ENCODE measurements at regions of chr2 and their contacts with region 1.

Region 1: DNA sequence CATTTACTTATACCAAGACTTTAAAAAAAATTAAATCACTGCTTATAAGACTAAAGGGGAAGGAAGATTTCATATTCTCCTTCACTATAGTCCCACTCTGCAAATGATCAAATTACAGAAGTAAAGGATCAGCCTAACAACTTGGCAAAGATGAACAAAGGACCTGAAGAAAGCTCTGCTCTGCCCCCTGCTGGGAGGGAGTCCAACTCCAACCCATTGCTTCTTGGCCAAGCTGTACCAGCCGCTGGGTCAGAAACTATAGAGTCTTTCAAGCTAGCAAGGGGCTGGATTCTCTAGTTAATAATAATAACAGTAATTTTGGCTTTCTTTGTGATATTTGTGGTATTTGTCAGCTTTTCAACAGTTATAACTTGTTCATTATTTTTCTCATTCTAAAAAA is 927.0 kb upstream of the CRIM1 start:
- DNase-seq: peak; percentile 56
- ATAC-seq: peak; percentile 39
- H3K4me3 Mint-ChIP-seq: no peak overlapping the region
- H3K27ac Mint-ChIP-seq: no peak overlapping the region
- H3K4me1 Mint-ChIP-seq: no peaks in the 10 kb centered on the region
- H3K27me3 Mint-ChIP-seq: no peaks in the 10 kb centered on the region

Region 2: DNA sequence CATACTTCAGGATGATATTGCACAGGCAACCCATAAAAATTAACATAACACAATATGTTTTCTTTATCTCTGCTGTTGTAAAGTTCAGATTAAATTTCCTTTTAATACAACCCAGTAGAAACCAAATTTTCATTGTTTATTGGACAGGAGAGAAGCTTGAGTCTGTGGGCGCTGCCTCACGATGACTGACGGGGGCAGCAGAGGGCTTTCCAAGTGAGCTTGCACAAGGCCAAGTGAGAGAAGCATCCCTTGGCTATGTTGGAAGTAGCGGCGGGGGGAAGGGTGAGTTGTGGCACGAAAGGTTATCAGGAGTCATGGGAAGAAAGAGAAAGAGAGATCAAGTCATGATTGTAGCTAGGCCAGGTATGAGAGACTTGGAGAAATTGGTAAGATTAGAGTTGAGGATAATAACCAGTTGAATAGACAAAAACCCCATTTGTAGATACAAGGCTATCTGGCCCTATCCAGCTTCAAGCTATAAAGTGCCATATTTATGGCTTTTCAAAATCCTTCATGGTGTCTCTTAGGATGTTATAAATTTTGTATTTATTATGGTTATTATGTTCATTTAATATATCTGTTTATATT is 1415.7 kb before region 1 on chr2:
- CTCF ChIA-PET with region 1: no interaction called
- POLR2A ChIA-PET with region 1: no interaction called
- intact Hi-C with region 1: loop called in 1 of 2 experiments (anchors 5 kb)
- DNase-seq: peak; percentile 61
- ATAC-seq: no peak
- H3K4me3 Mint-ChIP-seq: no peak overlapping the region
- H3K27ac Mint-ChIP-seq: no peak overlapping the region
- H3K4me1 Mint-ChIP-seq: no peaks in the 10 kb centered on the region
- H3K27me3 Mint-ChIP-seq: peaks cover 2% of the 10 kb centered on the region

Region 3: DNA sequence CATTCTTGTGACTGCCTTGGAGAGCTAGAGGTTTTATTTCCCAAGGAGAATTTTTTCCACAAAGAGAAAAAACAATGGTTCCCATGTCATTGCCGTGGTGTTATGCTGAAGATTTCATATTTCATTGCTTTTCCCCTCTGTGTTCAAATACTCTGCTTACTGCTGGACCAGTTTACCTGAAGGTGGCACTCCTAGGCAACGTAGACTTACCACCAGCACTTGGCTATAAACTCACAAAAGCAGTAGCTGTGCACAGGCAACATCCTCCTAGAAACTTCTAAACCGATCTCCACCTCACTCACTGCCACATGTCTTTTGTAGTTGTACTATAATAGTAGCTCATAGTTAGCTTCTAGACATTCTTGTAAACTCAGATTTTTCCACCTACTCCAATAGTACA is 392.7 kb before region 1 on chr2:
- CTCF ChIA-PET with region 1: no interaction called
- POLR2A ChIA-PET with region 1: no interaction called
- intact Hi-C with region 1: no loop called
- DNase-seq: no peak
- ATAC-seq: no peak
- H3K4me3 Mint-ChIP-seq: no peak overlapping the region
- H3K27ac Mint-ChIP-seq: no peak overlapping the region
- H3K4me1 Mint-ChIP-seq: no peaks in the 10 kb centered on the region
- H3K27me3 Mint-ChIP-seq: no peaks in the 10 kb centered on the region